WTC11 (cell line): ENCODE measurements at regions of chr1 and their contacts with region 1.

Region 1: GRCh38 chr1:12604114-12604874 is 13.7 kb downstream of the DHRS3 start:
- DNase-seq: no peak
- ATAC-seq: peak; percentile 21
- H3K4me3 Mint-ChIP-seq: no peak overlapping the region
- H3K27ac Mint-ChIP-seq: no peak overlapping the region
- H3K4me1 Mint-ChIP-seq: peaks cover 50% of the 10 kb centered on the region
- H3K27me3 Mint-ChIP-seq: no peaks in the 10 kb centered on the region; the same call in 1 of the 2 replicates
- CTCF ChIP-seq: no peak

Region 2: DNA sequence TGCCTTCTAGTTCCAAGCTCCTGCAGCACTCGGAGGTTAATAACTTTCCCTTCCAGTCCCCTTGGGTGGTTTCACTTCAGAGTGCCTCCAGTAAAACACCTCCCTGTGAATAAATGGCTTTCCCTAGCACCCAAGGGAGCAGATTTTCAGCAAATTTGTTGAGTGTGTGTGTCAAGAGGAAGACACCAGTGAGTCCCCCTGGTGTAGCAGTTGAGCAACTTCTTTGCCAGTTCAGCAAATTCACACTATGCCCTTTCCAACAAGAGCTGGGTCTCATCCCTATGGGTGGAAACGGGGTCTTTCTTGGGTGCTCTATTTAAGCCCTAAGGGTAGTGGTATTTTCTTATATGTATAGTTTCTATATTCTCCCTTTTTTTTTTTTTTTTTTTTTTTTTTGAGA is 38.8 kb after region 1 on chr1:
- CTCF ChIA-PET with region 1: interaction called, 11 read pairs
- POLR2A ChIA-PET with region 1: no interaction called
- DNase-seq: no peak
- ATAC-seq: no peak
- H3K4me3 Mint-ChIP-seq: no peak overlapping the region
- H3K27ac Mint-ChIP-seq: no peak overlapping the region
- H3K4me1 Mint-ChIP-seq: peaks cover 7% of the 10 kb centered on the region; the same call in 1 of the 2 replicates
- H3K27me3 Mint-ChIP-seq: peaks cover 19% of the 10 kb centered on the region
- CTCF ChIP-seq: no peak

Region 3: DNA sequence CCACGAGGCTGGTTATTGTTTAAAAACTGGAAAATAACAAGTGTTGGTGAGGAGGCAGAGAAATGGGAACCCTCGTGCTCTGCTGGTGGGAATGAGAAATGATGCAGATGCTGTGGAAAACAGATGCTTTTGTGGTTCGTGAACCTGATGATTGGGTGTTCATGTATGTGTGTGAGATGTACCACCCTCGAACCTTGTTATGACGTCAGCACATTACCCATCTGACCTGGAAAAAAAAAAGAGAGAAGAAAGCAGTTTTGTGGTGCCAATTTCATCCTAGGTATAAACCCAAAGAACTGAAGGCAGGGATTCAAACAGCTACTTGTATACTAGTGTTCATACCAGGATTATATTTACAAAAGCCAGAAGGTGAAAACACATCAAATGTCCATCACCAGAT is 135.3 kb after region 1 on chr1:
- CTCF ChIA-PET with region 1: no interaction called
- POLR2A ChIA-PET with region 1: no interaction called
- DNase-seq: no peak
- ATAC-seq: no peak
- H3K4me3 Mint-ChIP-seq: no peak overlapping the region
- H3K27ac Mint-ChIP-seq: no peak overlapping the region
- H3K4me1 Mint-ChIP-seq: peaks cover 6% of the 10 kb centered on the region
- H3K27me3 Mint-ChIP-seq: no peaks in the 10 kb centered on the region
- CTCF ChIP-seq: no peak